ENCODE measurements at regions of chr2 and their contacts with region 1.

Region 1: GRCh38 chr2:156490466-156490840 is 54.3 kb downstream of the GPD2 start:
- DNase-seq: no peak
- H3K4me3 ChIP-seq: no peak overlapping the region
- H3K27ac ChIP-seq: no peak overlapping the region
- H3K27me3 ChIP-seq: no peaks in the 10 kb centered on the region
- CTCF ChIP-seq: no peak

Region 2: GRCh38 chr2:156356014-156356754 is 134.3 kb before region 1 on chr2:
- CTCF ChIA-PET with region 1: no interaction called
- POLR2A ChIA-PET with region 1: interaction called, 13 read pairs
- DNase-seq: no peak
- H3K4me3 ChIP-seq: no peak overlapping the region
- H3K27ac ChIP-seq: no peak overlapping the region
- H3K27me3 ChIP-seq: no peaks in the 10 kb centered on the region
- CTCF ChIP-seq: no peak

Region 3: DNA sequence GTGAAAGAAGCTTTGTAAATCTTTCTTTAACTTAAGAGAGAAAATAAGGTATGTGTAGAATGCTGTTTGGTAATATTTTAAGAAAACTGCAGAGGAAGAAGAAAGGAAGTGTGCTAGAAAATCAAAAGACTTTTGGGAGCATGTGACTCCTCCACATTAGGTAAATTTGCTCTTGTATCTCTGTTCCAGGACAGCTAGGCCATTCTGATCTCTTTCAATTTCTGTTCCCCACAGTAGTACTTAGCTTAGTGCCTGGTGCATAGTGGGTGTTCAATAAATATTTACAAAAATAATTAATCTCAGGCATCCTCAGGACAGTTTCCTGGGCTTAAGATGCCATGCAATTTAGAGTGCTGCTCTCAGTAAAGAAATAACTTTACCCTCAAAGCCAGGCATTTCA is 50.8 kb after region 1 on chr2:
- CTCF ChIA-PET with region 1: no interaction called
- POLR2A ChIA-PET with region 1: interaction called, 10 read pairs
- DNase-seq: no peak
- H3K4me3 ChIP-seq: no peak overlapping the region
- H3K27ac ChIP-seq: no peak overlapping the region
- H3K27me3 ChIP-seq: no peaks in the 10 kb centered on the region
- CTCF ChIP-seq: no peak

Measured in AG04450 (cell line).